Dorsolateral prefrontal cortex (tissue), 120 donors: ENCODE measurements at regions of chr16 and their contacts with region 1.

Region 1: GRCh38 chr16:24253192-24253591 is 2.9 kb upstream of the CACNG3 start:
- DNase-seq: peak; percentile 36 to 77 (median 49)
- H3K4me3 ChIP-seq: no peak overlapping the region
- H3K27ac ChIP-seq: peak overlapping the region in 1 of 59 donors; percentile 23
- H3K27me3 ChIP-seq: peaks cover 0 to 34% (median 0%) of the 10 kb centered on the region in 45 donors
- CTCF ChIP-seq: peak; percentile 60 to 92 (median 84)

Region 2: GRCh38 chr16:24041826-24042631 is 211.2 kb before region 1 on chr16:
- intact Hi-C with region 1: loop called (anchors 2 kb)
- DNase-seq: peak; percentile 65 to 88 (median 73)
- H3K4me3 ChIP-seq: no peak overlapping the region
- H3K27ac ChIP-seq: peak overlapping the region in 1 of 59 donors; percentile 4
- H3K27me3 ChIP-seq: no peaks in the 10 kb centered on the region
- CTCF ChIP-seq: peak; percentile 62 to 96 (median 85)

Region 3: DNA sequence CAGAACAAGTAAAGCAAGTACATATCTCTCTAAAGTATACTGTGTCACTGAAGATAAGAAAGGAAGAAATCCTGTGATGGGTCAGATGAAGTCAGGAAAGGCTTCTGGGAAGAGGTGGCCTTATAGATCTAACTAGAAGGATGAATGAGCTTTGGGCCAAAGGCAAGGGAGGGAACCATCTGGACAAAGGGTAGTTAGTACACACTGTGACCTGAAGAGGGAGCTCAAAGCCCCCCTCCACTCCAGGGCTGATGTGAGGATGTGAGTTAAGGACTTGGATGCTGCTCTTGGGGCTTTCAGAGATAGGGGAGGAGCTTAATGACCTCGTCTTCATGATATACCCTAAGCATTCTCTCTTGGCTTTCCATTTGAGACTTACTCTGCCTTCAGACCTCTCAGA is 182.3 kb before region 1 on chr16:
- intact Hi-C with region 1: loop called in 1 of 2 experiments (anchors 10 kb)
- DNase-seq: peak in 1 of 10 donors; percentile 30
- H3K4me3 ChIP-seq: no peak overlapping the region
- H3K27ac ChIP-seq: no peak overlapping the region
- H3K27me3 ChIP-seq: no peaks in the 10 kb centered on the region
- CTCF ChIP-seq: peak in 53 of 56 donors; percentile 27 to 71 (median 55)

Region 4: DNA sequence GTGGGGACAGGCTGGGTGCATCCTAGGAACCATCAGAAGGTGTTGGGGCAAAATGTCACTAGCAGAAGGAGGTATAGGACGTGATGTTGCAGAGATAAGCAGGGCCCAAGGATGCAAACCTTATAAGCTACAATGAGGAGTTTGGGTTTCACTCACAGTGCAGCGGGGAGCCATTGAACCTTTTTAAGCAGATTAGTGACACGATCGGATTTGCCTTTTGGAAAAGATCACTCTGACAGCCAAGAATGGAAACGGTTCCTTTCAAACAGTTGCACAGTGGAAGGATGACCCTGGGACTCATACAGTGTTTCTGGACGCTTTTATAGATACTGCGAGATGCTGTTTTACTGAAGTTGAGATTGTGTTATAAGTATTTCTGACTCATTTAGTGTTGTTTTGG is 128.9 kb before region 1 on chr16:
- intact Hi-C with region 1: loop called in 1 of 2 experiments (anchors 5 kb)
- DNase-seq: no peak
- H3K4me3 ChIP-seq: no peak overlapping the region
- H3K27ac ChIP-seq: no peak overlapping the region
- H3K27me3 ChIP-seq: no peaks in the 10 kb centered on the region
- CTCF ChIP-seq: no peak

Region 5: DNA sequence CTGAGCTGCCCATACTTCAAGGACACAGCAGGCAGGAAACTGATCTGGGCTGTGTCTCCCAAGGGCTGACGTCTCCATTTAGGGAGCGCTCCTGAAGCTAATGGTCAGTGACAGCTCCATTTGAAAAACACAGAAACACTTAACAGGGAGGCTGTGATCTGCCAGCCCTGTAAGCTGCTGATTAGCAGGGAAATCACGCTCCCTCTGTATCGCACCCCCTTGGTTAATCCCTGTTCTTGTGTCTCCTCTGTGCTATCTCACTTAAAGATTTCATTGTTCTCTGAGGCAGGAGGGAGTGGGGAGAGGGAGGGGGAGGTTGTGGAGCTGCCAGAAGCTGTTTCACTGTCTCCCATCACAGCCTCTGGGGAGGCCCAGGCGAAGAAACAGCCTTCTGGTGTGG is 44.5 kb before region 1 on chr16:
- intact Hi-C with region 1: loop called in 1 of 2 experiments (anchors 2 kb)
- DNase-seq: peak; percentile 47 to 88 (median 70)
- H3K4me3 ChIP-seq: peak overlapping the region in 23 of 59 donors; percentile 1 to 44 (median 12)
- H3K27ac ChIP-seq: peak overlapping the region in 58 of 59 donors; percentile 4 to 95 (median 82)
- H3K27me3 ChIP-seq: no peaks in the 10 kb centered on the region
- CTCF ChIP-seq: peak in 7 of 56 donors; percentile 6 to 39 (median 17)

Region 6: DNA sequence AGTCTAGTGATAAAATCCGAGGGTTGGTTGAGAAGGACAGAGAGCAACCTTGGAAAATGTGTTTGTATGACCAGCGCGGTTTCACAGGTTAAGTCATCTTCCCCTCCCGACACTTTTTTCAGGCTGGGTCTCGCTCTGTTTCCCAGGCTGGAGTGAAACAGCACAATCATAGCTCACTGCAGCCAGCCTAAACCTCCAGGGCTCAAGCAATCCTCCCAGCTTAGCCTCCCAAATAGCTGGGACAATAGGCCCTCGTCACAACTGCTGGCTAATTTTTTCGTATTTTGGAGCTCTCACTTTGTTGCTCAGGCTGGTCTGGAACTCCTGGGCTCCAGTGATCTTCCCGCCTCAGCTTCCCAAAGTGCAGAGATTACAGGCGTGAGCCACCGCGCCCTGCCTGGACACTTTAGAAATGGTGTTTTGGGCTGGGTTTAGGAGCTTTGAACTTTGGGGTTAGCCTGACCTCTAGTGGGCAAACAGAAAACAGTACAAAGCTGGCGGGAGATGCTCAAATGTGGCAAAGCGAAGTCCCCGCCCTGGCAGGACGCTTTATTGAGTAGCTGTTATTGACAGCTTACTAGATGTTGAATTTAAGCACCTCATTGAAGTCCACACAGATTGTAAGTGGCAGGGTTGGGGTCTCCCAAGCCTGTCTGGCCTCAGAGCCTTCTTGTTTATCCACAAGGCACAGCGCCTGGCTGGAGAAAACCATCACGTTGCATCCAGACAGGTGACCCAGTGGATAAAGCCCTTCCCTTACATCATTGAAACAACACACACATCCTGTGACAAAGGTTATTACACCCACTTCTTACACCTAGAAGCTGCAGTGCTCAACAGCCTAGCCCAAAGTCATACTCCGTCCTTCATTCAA is 251.5 kb after region 1 on chr16:
- intact Hi-C with region 1: loop called (anchors 5 to 10 kb)
- DNase-seq: peak; percentile 32 to 65 (median 55)
- H3K4me3 ChIP-seq: no peak overlapping the region
- H3K27ac ChIP-seq: no peak overlapping the region
- H3K27me3 ChIP-seq: peaks cover 0 to 7% (median 0%) of the 10 kb centered on the region in 45 donors
- CTCF ChIP-seq: peak; percentile 63 to 93 (median 85)